Activated CD8-positive, alpha-beta memory T cell treated with anti-CD3 and anti-CD28 coated beads, Interleukin-2, amount 10 ng/mL, durations not matched to agents 7 days and 5 days (primary cell): ENCODE measurements at regions of chr16 and their contacts with region 1.

Region 1: GRCh38 chr16:70508752-70509151 is 14.6 kb downstream of the COG4 start:
- DNase-seq: no peak
- ATAC-seq: peak; percentile 85
- H3K4me3 Mint-ChIP-seq: no peak overlapping the region
- H3K27ac Mint-ChIP-seq: peak overlapping the region; percentile 78
- H3K4me1 Mint-ChIP-seq: peaks cover 9% of the 10 kb centered on the region
- H3K27me3 Mint-ChIP-seq: no peaks in the 10 kb centered on the region

Region 2: DNA sequence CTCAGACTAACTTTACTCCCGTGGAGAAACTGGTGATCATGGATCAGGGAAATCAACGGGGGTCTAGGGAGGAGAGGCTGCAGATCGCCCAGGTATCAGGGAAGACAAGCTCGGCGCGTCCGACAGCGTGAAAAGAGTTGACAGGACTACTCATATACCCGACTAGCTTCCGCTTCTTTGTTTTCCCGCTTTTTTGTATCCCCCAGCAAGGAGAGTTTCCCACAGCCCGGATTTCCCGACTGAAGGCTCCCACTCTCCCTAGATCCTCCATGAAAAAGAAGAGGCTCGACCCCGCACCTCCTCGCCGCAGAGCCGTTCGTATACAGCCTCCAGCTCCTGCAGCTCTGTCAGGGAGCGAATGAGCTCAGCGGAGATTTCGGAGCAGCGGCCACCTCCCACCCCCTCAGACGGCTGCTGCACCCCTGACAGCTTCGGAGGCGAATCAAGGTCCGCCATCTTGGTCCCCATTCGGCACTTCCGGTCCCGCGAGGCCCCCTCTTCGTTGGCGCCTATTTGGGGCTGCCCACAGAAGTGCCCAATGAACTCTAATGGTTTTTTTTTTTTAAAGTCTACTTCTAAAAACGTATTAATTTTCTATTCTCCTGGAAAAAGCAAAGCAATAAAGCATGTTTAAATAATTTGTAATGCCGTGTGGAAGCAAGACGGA is 14.5 kb after region 1 on chr16 and contains the start of gene COG4:
- CTCF ChIA-PET with region 1: interaction called, 25 read pairs
- DNase-seq: peak; percentile 95
- ATAC-seq: peak; percentile 74
- H3K4me3 Mint-ChIP-seq: peak within 1 kb of the TSS; percentile 96
- H3K27ac Mint-ChIP-seq: peak within 1 kb of the TSS; percentile 97
- H3K4me1 Mint-ChIP-seq: peaks cover 49% of the 10 kb centered on the region
- H3K27me3 Mint-ChIP-seq: no peaks in the 10 kb centered on the region
- total RNA-seq, gene COG4: 67.3 to 72.5 TPM

Region 3: GRCh38 chr16:70529051-70529777 is 20.5 kb after region 1 on chr16:
- CTCF ChIA-PET with region 1: interaction called, 16 read pairs
- DNase-seq: no peak
- ATAC-seq: no peak
- H3K4me3 Mint-ChIP-seq: peak overlapping the region; percentile 18
- H3K27ac Mint-ChIP-seq: peak overlapping the region; percentile 50
- H3K4me1 Mint-ChIP-seq: peaks cover 57% of the 10 kb centered on the region
- H3K27me3 Mint-ChIP-seq: no peaks in the 10 kb centered on the region

Region 4: GRCh38 chr16:70653809-70654771 is 145.3 kb after region 1 on chr16:
- CTCF ChIA-PET with region 1: interaction called, 27 read pairs
- DNase-seq: peak; percentile 88
- ATAC-seq: peak; percentile 78
- H3K4me3 Mint-ChIP-seq: peak overlapping the region; percentile 35
- H3K27ac Mint-ChIP-seq: peak overlapping the region; percentile 24
- H3K4me1 Mint-ChIP-seq: peaks cover 8% of the 10 kb centered on the region
- H3K27me3 Mint-ChIP-seq: no peaks in the 10 kb centered on the region